Activated CD8-positive, alpha-beta T cell treated with anti-CD3 and anti-CD28 coated beads for 36 hours (primary cell): ENCODE measurements at regions of chr12 and their contacts with region 1.

Region 1: GRCh38 chr12:27305673-27306456 is 26.8 kb upstream of the BMAL2 start:
- DNase-seq: no peak
- ATAC-seq: no peak
- H3K4me3 Mint-ChIP-seq: no peak overlapping the region
- H3K27ac Mint-ChIP-seq: no peak overlapping the region
- H3K4me1 Mint-ChIP-seq: peaks cover 9% of the 10 kb centered on the region
- H3K27me3 Mint-ChIP-seq: no peaks in the 10 kb centered on the region
- CTCF ChIP-seq: peak; percentile 69

Region 2: GRCh38 chr12:27034607-27035293 is 271.1 kb before region 1 on chr12:
- CTCF ChIA-PET with region 1: interaction called, 22 read pairs
- POLR2A ChIA-PET with region 1: no interaction called
- intact Hi-C with region 1: no loop called
- DNase-seq: no peak
- ATAC-seq: no peak
- H3K4me3 Mint-ChIP-seq: no peak overlapping the region
- H3K27ac Mint-ChIP-seq: no peak overlapping the region
- H3K4me1 Mint-ChIP-seq: no peaks in the 10 kb centered on the region
- H3K27me3 Mint-ChIP-seq: no peaks in the 10 kb centered on the region
- CTCF ChIP-seq: no peak

Region 3: DNA sequence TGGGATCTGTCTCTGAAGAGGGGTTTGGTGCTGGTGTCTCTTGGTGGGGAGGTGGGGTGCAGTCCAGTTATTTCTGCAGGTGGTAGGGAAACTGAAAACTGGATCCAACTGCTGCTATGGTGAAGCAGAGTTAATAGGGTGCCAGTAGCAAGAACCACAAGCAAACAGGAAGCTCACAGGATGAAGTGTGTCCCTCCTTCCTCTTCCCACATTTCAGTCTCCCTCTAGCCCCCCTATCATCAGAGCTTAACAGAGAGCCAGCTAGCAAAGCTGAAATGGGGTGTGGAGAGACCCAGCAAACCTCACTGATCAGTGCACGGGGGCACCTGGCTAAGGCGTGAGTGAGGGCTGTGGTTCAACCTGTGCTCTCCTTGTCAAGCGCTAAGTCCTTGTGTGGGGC is 154.4 kb before region 1 on chr12:
- CTCF ChIA-PET with region 1: interaction called, 12 read pairs
- POLR2A ChIA-PET with region 1: no interaction called
- intact Hi-C with region 1: loop called (anchors 10 kb)
- DNase-seq: no peak
- ATAC-seq: no peak
- H3K4me3 Mint-ChIP-seq: no peak overlapping the region
- H3K27ac Mint-ChIP-seq: no peak overlapping the region
- H3K4me1 Mint-ChIP-seq: peaks cover 3% of the 10 kb centered on the region
- H3K27me3 Mint-ChIP-seq: no peaks in the 10 kb centered on the region
- CTCF ChIP-seq: no peak

Region 4: GRCh38 chr12:27243804-27244683 is 61.8 kb before region 1 on chr12 and contains the start of gene STK38L:
- CTCF ChIA-PET with region 1: interaction called, 13 read pairs
- POLR2A ChIA-PET with region 1: no interaction called
- intact Hi-C with region 1: no loop called
- DNase-seq: peak; percentile 99
- ATAC-seq: peak; percentile 98
- H3K4me3 Mint-ChIP-seq: peak within 1 kb of the TSS; percentile 94
- H3K27ac Mint-ChIP-seq: peak within 1 kb of the TSS; percentile 94
- H3K4me1 Mint-ChIP-seq: peaks cover 40% of the 10 kb centered on the region
- H3K27me3 Mint-ChIP-seq: no peaks in the 10 kb centered on the region
- CTCF ChIP-seq: no peak
- total RNA-seq, gene STK38L: 23.5 to 27.6 TPM

Region 5: GRCh38 chr12:27324530-27324929 is 18.7 kb after region 1 on chr12:
- CTCF ChIA-PET with region 1: interaction called, 17 read pairs
- POLR2A ChIA-PET with region 1: no interaction called
- intact Hi-C with region 1: no loop called
- DNase-seq: no peak
- ATAC-seq: no peak
- H3K4me3 Mint-ChIP-seq: no peak overlapping the region
- H3K27ac Mint-ChIP-seq: no peak overlapping the region
- H3K4me1 Mint-ChIP-seq: peaks cover 4% of the 10 kb centered on the region
- H3K27me3 Mint-ChIP-seq: no peaks in the 10 kb centered on the region
- CTCF ChIP-seq: no peak

Region 6: DNA sequence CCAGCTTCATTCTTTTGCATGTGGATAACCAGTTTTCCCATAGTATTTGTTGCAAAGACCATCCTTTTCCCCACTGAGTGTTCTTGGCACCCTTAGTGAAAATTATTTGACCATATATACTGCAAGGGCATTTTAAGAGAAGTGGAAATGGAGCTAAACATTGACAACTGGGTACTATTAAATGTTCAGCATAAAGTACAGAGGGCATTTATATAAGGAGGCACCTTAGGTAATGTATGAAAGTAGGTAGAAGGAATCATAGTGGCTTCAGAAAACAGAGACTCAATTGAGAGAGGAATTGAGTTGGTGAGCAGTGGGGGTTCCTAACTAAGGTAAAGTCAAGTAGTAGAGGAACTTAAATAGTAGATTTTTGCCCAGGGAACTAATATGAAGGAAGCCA is 106.2 kb after region 1 on chr12:
- CTCF ChIA-PET with region 1: no interaction called
- POLR2A ChIA-PET with region 1: no interaction called
- intact Hi-C with region 1: no loop called
- DNase-seq: no peak
- ATAC-seq: no peak
- H3K4me3 Mint-ChIP-seq: no peak overlapping the region
- H3K27ac Mint-ChIP-seq: no peak overlapping the region
- H3K4me1 Mint-ChIP-seq: no peaks in the 10 kb centered on the region
- H3K27me3 Mint-ChIP-seq: no peaks in the 10 kb centered on the region
- CTCF ChIP-seq: no peak

Region 7: GRCh38 chr12:27652174-27652763 is 346.4 kb after region 1 on chr12:
- CTCF ChIA-PET with region 1: no interaction called
- POLR2A ChIA-PET with region 1: no interaction called
- intact Hi-C with region 1: no loop called
- DNase-seq: peak; percentile 34
- ATAC-seq: no peak
- H3K4me3 Mint-ChIP-seq: no peak overlapping the region
- H3K27ac Mint-ChIP-seq: no peak overlapping the region
- H3K4me1 Mint-ChIP-seq: peaks cover 2% of the 10 kb centered on the region
- H3K27me3 Mint-ChIP-seq: peaks cover 1% of the 10 kb centered on the region
- CTCF ChIP-seq: peak; percentile 96